Calu3 (cell line): ENCODE measurements at regions of chr4 and their contacts with region 1.

Region 1: GRCh38 chr4:158255727-158256324 is 45.5 kb downstream of the TMEM144 start:
- DNase-seq: peak; percentile 3
- H3K4me3 Mint-ChIP-seq: no peak overlapping the region
- H3K27ac Mint-ChIP-seq: no peak overlapping the region
- H3K4me1 Mint-ChIP-seq: no peaks in the 10 kb centered on the region
- H3K27me3 Mint-ChIP-seq: no peaks in the 10 kb centered on the region
- CTCF ChIP-seq: peak; percentile 43

Region 2: DNA sequence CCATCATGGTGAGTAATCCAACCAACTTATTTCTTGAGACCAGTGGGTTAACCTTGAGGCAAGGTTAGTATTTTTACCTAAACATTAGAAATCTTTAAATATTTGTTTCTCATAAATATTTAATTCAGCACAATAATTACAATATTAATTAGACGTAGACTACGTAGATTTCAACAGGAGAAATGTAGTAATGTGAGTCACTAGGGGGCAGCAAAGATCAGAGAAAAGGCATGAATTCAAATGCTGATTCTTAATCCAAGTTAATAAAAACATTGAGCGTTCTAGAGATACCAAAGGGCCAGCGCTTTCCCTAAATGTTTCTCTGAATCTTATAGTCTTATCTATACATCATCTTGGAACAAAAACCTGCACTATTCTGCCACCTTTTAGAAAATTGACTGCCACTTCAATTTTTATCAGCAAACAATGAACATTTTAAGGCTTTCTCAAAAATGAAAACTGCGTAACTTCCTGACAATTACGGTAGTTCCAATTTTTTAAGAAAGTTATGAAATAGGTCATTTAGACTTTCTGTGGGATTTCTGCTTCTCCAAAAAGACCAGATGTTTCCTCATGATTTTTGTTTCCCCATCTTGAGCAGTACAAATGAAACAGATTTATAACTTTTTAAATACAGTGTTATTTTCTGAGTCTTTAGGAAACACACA is 263.7 kb before region 1 on chr4:
- CTCF ChIA-PET with region 1: no interaction called
- intact Hi-C with region 1: loop called (anchors 2 kb)
- DNase-seq: peak; percentile 60
- H3K4me3 Mint-ChIP-seq: no peak overlapping the region
- H3K27ac Mint-ChIP-seq: no peak overlapping the region
- H3K4me1 Mint-ChIP-seq: peaks cover 11% of the 10 kb centered on the region
- H3K27me3 Mint-ChIP-seq: no peaks in the 10 kb centered on the region
- CTCF ChIP-seq: peak; percentile 29

Region 3: DNA sequence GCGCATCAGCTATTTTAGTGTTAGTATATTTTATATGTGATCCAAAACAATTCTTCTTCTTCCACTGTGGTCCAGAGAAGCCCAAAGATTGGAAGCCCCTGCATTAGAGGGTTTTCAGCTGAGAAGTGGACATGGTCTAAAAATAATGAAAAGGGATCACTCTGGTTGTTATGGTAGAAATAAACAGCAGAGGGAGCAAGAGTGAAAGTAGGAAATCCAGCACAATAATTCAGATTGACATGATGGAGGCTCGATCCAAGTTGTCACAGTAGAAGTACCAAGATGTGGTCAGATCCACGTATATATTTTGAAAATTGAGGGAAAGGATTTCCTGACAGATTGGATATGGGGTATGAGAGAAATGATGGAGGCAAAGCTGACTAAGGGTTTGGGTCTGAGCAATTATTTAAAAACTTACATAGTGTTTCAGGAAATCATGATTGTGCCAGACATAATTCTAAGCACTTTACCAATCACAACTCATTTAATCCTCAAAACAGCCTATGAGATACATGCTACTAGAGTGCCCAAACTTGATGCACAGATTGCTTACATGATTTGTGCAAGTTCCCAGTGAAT is 62.6 kb before region 1 on chr4:
- CTCF ChIA-PET with region 1: no interaction called
- intact Hi-C with region 1: loop called (anchors 1 kb)
- DNase-seq: no peak
- H3K4me3 Mint-ChIP-seq: no peak overlapping the region
- H3K27ac Mint-ChIP-seq: no peak overlapping the region
- H3K4me1 Mint-ChIP-seq: no peaks in the 10 kb centered on the region
- H3K27me3 Mint-ChIP-seq: no peaks in the 10 kb centered on the region
- CTCF ChIP-seq: no peak

Region 4: GRCh38 chr4:158384407-158384806 is 128.6 kb after region 1 on chr4:
- CTCF ChIA-PET with region 1: no interaction called
- intact Hi-C with region 1: loop called (anchors 10 kb)
- DNase-seq: no peak
- H3K4me3 Mint-ChIP-seq: no peak overlapping the region
- H3K27ac Mint-ChIP-seq: no peak overlapping the region
- H3K4me1 Mint-ChIP-seq: peaks cover 5% of the 10 kb centered on the region
- H3K27me3 Mint-ChIP-seq: no peaks in the 10 kb centered on the region
- CTCF ChIP-seq: no peak

Region 5: DNA sequence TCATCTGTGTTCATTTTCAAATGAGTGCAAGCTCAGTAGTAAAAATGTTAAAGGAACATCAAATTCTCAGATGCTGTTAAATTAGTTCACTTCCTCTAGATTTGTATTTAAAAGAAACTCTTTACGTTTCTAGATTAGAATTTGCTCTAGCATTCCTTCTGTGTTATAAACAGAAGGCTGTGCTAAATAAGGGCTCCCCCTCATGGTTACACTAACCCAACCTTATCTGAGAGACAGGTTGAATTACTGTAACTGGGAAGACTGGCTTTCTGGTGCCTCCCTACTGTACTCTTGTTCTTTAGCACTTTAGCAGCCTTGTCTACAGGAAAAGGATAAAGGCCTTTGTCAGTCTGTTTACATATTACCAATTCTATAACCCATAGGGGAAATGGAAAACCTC is 322.6 kb after region 1 on chr4:
- CTCF ChIA-PET with region 1: no interaction called
- intact Hi-C with region 1: loop called (anchors 2 kb)
- DNase-seq: peak; percentile 5
- H3K4me3 Mint-ChIP-seq: no peak overlapping the region
- H3K27ac Mint-ChIP-seq: no peak overlapping the region
- H3K4me1 Mint-ChIP-seq: no peaks in the 10 kb centered on the region
- H3K27me3 Mint-ChIP-seq: no peaks in the 10 kb centered on the region
- CTCF ChIP-seq: no peak

Region 6: GRCh38 chr4:158624889-158625478 is 369.2 kb after region 1 on chr4:
- CTCF ChIA-PET with region 1: no interaction called
- intact Hi-C with region 1: loop called (anchors 1 kb)
- DNase-seq: peak; percentile 24
- H3K4me3 Mint-ChIP-seq: no peak overlapping the region
- H3K27ac Mint-ChIP-seq: no peak overlapping the region
- H3K4me1 Mint-ChIP-seq: no peaks in the 10 kb centered on the region
- H3K27me3 Mint-ChIP-seq: no peaks in the 10 kb centered on the region
- CTCF ChIP-seq: peak; percentile 34